ENCODE measurements at regions of chr3 and their contacts with region 1.

Region 1: GRCh38 chr3:173548261-173548660 is 150.7 kb downstream of the NLGN1 start:
- DNase-seq: no peak
- ATAC-seq: no peak
- H3K4me3 ChIP-seq: no peak overlapping the region
- H3K27ac ChIP-seq: no peak overlapping the region
- H3K4me1 ChIP-seq: peaks cover 0 to 1% (median 0%) of the 10 kb centered on the region in 9 donors
- H3K27me3 ChIP-seq: no peaks in the 10 kb centered on the region
- CTCF ChIP-seq: no peak

Region 2: GRCh38 chr3:172808969-172809546 is 739.2 kb before region 1 on chr3:
- intact Hi-C with region 1: loop called in 6 of 10 experiments (anchors 5 to 10 kb)
- DNase-seq: no peak
- ATAC-seq: no peak
- H3K4me3 ChIP-seq: no peak overlapping the region
- H3K27ac ChIP-seq: no peak overlapping the region
- H3K4me1 ChIP-seq: no peaks in the 10 kb centered on the region
- H3K27me3 ChIP-seq: no peaks in the 10 kb centered on the region
- CTCF ChIP-seq: peak in 8 of 9 donors; percentile 9 to 64 (median 48)

Region 3: GRCh38 chr3:173275740-173276139 is 272.5 kb before region 1 on chr3:
- intact Hi-C with region 1: no loop called
- DNase-seq: no peak
- ATAC-seq: no peak
- H3K4me3 ChIP-seq: no peak overlapping the region
- H3K27ac ChIP-seq: no peak overlapping the region
- H3K4me1 ChIP-seq: no peaks in the 10 kb centered on the region
- H3K27me3 ChIP-seq: no peaks in the 10 kb centered on the region
- CTCF ChIP-seq: no peak

Region 4: GRCh38 chr3:173354124-173354523 is 194.1 kb before region 1 on chr3:
- intact Hi-C with region 1: no loop called
- DNase-seq: no peak
- ATAC-seq: no peak
- H3K4me3 ChIP-seq: no peak overlapping the region
- H3K27ac ChIP-seq: no peak overlapping the region
- H3K4me1 ChIP-seq: no peaks in the 10 kb centered on the region
- H3K27me3 ChIP-seq: no peaks in the 10 kb centered on the region
- CTCF ChIP-seq: no peak

Region 5: GRCh38 chr3:173411375-173411973 is 136.8 kb before region 1 on chr3:
- intact Hi-C with region 1: loop called in 9 of 10 experiments (anchors 1 to 10 kb)
- DNase-seq: peak in 1 of 2 donors; percentile 24
- ATAC-seq: peak in 7 of 8 donors; percentile 47 to 86 (median 57)
- H3K4me3 ChIP-seq: peak overlapping the region in 6 of 10 donors; percentile 9 to 40 (median 28)
- H3K27ac ChIP-seq: peak overlapping the region in 2 of 10 donors; percentile 34 to 37
- H3K4me1 ChIP-seq: peaks cover 0 to 19% (median 6%) of the 10 kb centered on the region in 9 donors
- H3K27me3 ChIP-seq: no peaks in the 10 kb centered on the region
- CTCF ChIP-seq: peak; percentile 21 to 67 (median 47)

Measured in heart right ventricle (tissue), 16 donors.